ENCODE measurements at regions of chr11 and their contacts with region 1.

Region 1: GRCh38 chr11:1619449-1619848 is 2.5 kb downstream of the KRTAP5-4 start:
- DNase-seq: peak in 2 of 5 donors; percentile 6 to 40
- H3K4me3 ChIP-seq: no peak overlapping the region
- H3K4me3 Mint-ChIP-seq: peak overlapping the region in 6 of 7 donors; percentile 0 to 43 (median 14)
- H3K27ac ChIP-seq: no peak overlapping the region
- H3K27ac Mint-ChIP-seq: peak overlapping the region in 4 of 8 donors; percentile 17 to 85 (median 54)
- H3K4me1 ChIP-seq: no peaks in the 10 kb centered on the region
- H3K4me1 Mint-ChIP-seq: peaks cover 5 to 7% (median 6%) of the 10 kb centered on the region in 3 donors
- H3K27me3 ChIP-seq: peaks cover 7% of the 10 kb centered on the region
- H3K27me3 Mint-ChIP-seq: peaks cover 13 to 48% of the 10 kb centered on the region in 2 donors

Region 2: GRCh38 chr11:1291295-1292017 is 328.0 kb before region 1 on chr11:
- CTCF ChIA-PET with region 1: no interaction called
- POLR2A ChIA-PET with region 1: interaction called, 10 read pairs
- DNase-seq: peak in 1 of 5 donors; percentile 30
- H3K4me3 ChIP-seq: no peak overlapping the region
- H3K4me3 Mint-ChIP-seq: no peak overlapping the region
- H3K27ac ChIP-seq: no peak overlapping the region
- H3K27ac Mint-ChIP-seq: peak overlapping the region in 1 of 8 donors; percentile 75
- H3K4me1 ChIP-seq: no peaks in the 10 kb centered on the region
- H3K4me1 Mint-ChIP-seq: peaks cover 0 to 4% (median 4%) of the 10 kb centered on the region in 3 donors
- H3K27me3 ChIP-seq: no peaks in the 10 kb centered on the region
- H3K27me3 Mint-ChIP-seq: no peaks in the 10 kb centered on the region